Activated CD4-positive, alpha-beta memory T cell treated with anti-CD3 and anti-CD28 coated beads for 36 hours (primary cell): ENCODE measurements at regions of chr3 and their contacts with region 1.

Region 1: GRCh38 chr3:138915503-138916498 is 31.1 kb downstream of the FOXL2 start:
- DNase-seq: peak; percentile 88
- H3K4me3 Mint-ChIP-seq: peak overlapping the region; percentile 78
- H3K27ac Mint-ChIP-seq: no peak overlapping the region
- H3K4me1 Mint-ChIP-seq: peaks cover 5% of the 10 kb centered on the region
- H3K27me3 Mint-ChIP-seq: no peaks in the 10 kb centered on the region

Region 2: GRCh38 chr3:138068579-138069174 is 847.1 kb before region 1 on chr3:
- CTCF ChIA-PET with region 1: interaction called, 10 read pairs
- POLR2A ChIA-PET with region 1: no interaction called
- intact Hi-C with region 1: no loop called
- DNase-seq: peak; percentile 86
- H3K4me3 Mint-ChIP-seq: no peak overlapping the region
- H3K27ac Mint-ChIP-seq: no peak overlapping the region
- H3K4me1 Mint-ChIP-seq: peaks cover 14% of the 10 kb centered on the region
- H3K27me3 Mint-ChIP-seq: peaks cover 25% of the 10 kb centered on the region

Region 3: DNA sequence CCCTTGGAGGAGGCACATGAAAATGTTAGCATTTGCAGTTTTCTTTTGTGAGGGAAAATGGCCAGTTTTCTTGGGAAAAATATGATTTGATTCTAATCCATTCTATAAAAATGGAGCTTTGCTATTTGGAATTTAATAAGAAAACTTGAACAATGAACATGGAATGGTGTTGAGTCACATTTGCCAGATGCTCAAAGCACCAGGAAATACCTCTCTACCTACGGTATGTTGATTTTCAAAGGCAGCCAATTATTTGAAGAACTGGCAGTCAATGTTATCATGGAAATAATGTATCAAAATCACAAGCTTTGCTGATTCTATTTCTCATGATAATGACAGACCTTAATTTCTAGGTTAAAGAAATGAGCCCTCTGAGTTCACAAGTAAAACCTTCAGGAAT is 601.0 kb before region 1 on chr3:
- CTCF ChIA-PET with region 1: no interaction called
- POLR2A ChIA-PET with region 1: no interaction called
- intact Hi-C with region 1: no loop called
- DNase-seq: no peak
- H3K4me3 Mint-ChIP-seq: no peak overlapping the region
- H3K27ac Mint-ChIP-seq: no peak overlapping the region
- H3K4me1 Mint-ChIP-seq: no peaks in the 10 kb centered on the region
- H3K27me3 Mint-ChIP-seq: no peaks in the 10 kb centered on the region

Region 4: DNA sequence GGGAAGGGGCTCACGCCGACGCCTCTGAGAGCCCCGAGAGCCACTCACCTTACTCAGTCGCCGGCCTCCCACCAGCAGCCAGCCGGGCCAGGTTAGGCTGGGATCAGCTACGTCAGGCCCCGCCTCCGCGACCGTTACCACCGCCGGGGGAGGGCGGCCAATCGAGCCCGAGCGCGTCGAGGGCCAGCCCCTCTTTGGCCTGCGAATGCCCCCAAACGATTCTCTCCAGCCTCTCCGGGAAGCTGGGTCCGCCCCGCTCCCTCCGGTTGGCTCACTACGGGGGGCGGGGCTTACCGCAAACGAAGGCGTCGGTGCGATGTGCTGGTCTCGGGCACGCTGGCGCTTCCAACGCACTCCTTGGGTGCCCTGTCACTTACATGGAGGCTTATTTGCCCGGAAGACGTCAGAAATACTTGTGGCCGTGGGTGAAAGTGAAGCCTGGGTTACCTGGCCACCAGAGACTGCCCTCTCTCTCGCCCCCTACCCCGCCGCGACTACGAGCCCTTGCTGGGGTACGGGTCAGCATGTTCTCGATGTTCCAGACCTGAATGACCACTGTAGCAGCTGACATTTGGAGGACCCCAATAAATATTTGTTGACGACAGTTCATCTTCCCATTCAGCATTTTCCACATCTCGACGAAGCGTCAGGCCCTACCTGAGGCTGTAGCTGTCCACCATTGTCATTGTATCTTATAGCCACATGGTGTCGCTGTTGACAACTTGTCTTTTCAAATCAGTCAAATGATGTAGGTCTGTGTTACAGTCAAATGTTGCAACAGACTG is 321.5 kb before region 1 on chr3 and contains the start of gene CEP70:
- CTCF ChIA-PET with region 1: interaction called, 232 read pairs
- POLR2A ChIA-PET with region 1: interaction called, 7 read pairs
- intact Hi-C with region 1: loop called (anchors 1 kb)
- DNase-seq: peak; percentile 92
- H3K4me3 Mint-ChIP-seq: peak within 1 kb of the TSS; percentile 81
- H3K27ac Mint-ChIP-seq: peak within 1 kb of the TSS; percentile 86
- H3K4me1 Mint-ChIP-seq: peaks cover 3% of the 10 kb centered on the region
- H3K27me3 Mint-ChIP-seq: no peaks in the 10 kb centered on the region
- total RNA-seq, gene CEP70: 8.3 to 8.4 TPM

Region 5: GRCh38 chr3:138694287-138695007 is 221.4 kb before region 1 on chr3:
- CTCF ChIA-PET with region 1: interaction called, 245 read pairs
- POLR2A ChIA-PET with region 1: no interaction called
- intact Hi-C with region 1: loop called (anchors 1 kb)
- DNase-seq: no peak
- H3K4me3 Mint-ChIP-seq: no peak overlapping the region
- H3K27ac Mint-ChIP-seq: no peak overlapping the region
- H3K4me1 Mint-ChIP-seq: no peaks in the 10 kb centered on the region
- H3K27me3 Mint-ChIP-seq: no peaks in the 10 kb centered on the region

Region 6: GRCh38 chr3:138774529-138775253 is 141.1 kb before region 1 on chr3:
- CTCF ChIA-PET with region 1: interaction called, 10 read pairs
- POLR2A ChIA-PET with region 1: no interaction called
- intact Hi-C with region 1: no loop called
- DNase-seq: peak; percentile 58
- H3K4me3 Mint-ChIP-seq: no peak overlapping the region
- H3K27ac Mint-ChIP-seq: no peak overlapping the region
- H3K4me1 Mint-ChIP-seq: peaks cover 32% of the 10 kb centered on the region
- H3K27me3 Mint-ChIP-seq: no peaks in the 10 kb centered on the region

Region 7: GRCh38 chr3:138862531-138862923 is 53.3 kb before region 1 on chr3:
- CTCF ChIA-PET with region 1: interaction called, 10 read pairs
- POLR2A ChIA-PET with region 1: no interaction called
- intact Hi-C with region 1: no loop called
- DNase-seq: no peak
- H3K4me3 Mint-ChIP-seq: no peak overlapping the region
- H3K27ac Mint-ChIP-seq: no peak overlapping the region
- H3K4me1 Mint-ChIP-seq: peaks cover 3% of the 10 kb centered on the region
- H3K27me3 Mint-ChIP-seq: no peaks in the 10 kb centered on the region

Region 8: DNA sequence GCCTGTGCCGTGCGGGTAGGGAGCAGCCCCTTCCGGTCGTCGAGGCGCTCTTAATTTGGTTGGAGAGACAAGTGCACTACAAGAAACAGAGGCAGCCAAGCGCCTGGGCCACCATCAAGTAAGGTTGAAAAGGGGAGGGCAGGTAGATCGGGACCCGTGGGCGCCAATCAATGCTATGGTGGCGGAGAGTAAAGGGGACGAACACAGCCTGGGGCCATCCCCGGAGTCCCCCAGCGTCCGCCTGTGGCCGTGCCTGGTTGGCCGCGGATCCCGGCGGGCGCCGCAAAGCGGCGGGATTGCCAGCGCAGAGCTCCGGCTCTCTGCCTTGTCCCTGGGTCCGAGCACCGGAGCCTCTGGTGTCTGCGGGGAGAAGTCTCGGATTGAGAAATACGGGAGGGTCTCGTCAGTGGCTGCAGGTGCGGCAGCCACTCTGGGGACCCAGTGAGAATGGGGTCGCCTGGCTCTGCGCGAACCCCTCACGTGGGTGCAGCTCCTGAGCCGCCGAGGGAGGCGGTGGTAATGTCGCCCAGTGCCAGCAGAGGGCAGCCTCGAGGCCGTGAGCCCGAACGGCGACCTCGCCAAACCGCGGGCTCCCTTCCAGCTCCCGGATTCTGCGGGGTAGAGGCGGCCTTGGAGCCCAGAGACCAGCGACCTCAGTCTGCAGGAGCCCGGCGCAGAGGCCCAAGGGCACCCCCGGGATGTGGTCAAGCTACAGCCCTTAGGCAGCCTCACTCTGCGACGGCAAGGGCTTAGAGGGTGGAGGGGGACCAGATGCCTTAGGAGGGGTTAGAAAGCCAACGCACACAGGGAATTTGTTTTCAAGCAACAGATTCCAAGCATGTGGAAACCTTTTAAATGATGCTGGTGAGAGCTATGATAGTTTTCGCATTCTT is 20.3 kb after region 1 on chr3:
- CTCF ChIA-PET with region 1: interaction called, 171 read pairs
- POLR2A ChIA-PET with region 1: interaction called, 3 read pairs
- intact Hi-C with region 1: no loop called
- DNase-seq: peak; percentile 80
- H3K4me3 Mint-ChIP-seq: peak overlapping the region; percentile 70
- H3K27ac Mint-ChIP-seq: no peak overlapping the region
- H3K4me1 Mint-ChIP-seq: peaks cover 30% of the 10 kb centered on the region
- H3K27me3 Mint-ChIP-seq: peaks cover 70% of the 10 kb centered on the region